Activated naive CD4-positive, alpha-beta T cell treated with anti-CD3 and anti-CD28 coated beads for 36 hours (primary cell): ENCODE measurements at regions of chr1 and their contacts with region 1.

Region 1: DNA sequence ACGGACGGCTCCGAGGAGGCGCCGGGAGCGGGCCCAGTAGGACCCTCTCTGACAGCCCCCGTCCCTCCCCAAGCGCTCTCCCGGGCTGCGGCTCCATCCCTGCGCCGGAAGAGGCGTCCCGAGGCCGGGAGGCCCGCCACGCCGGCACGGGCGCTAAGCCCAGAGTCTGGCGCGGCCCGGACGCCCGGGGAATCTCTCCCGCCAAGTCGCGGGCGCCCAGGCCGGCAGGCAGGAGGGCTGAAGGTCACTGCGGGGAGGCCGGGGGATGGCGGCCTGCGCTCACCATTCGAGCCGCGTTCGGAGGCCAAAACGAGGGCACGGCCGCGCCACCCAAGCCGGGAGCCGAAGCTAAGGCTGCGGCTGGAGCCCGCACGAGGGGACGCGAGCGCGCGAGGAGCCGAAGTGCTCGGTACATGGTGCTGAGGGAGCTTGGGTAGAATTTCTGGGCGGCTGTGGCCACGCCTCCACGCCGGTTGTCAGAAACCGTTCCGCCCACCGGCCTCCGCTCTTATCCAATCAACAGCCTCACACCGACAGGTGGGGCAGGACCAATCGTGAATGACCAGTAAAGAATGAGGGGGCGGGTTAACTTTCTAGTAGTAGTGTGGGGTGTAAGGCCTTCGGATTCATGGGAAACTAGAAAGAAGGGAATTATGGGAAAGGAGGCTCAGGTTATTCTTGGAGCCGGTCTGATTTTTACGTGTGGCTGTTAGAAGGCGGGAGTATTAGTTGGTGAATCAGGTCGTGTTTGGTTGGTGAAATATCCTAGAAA is at the start of gene FH:
- DNase-seq: peak; percentile 97
- H3K4me3 Mint-ChIP-seq: peak within 1 kb of the TSS; percentile 89
- H3K27ac Mint-ChIP-seq: peak within 1 kb of the TSS; percentile 77
- H3K4me1 Mint-ChIP-seq: peaks cover 11% of the 10 kb centered on the region
- H3K27me3 Mint-ChIP-seq: peaks cover 11% of the 10 kb centered on the region
- total RNA-seq, gene FH: 91.6 to 95.4 TPM

Region 2: GRCh38 chr1:241536969-241537368 is 17.5 kb after region 1 on chr1:
- CTCF ChIA-PET with region 1: no interaction called
- intact Hi-C with region 1: no loop called
- DNase-seq: no peak
- H3K4me3 Mint-ChIP-seq: no peak overlapping the region
- H3K27ac Mint-ChIP-seq: no peak overlapping the region
- H3K4me1 Mint-ChIP-seq: peaks cover 14% of the 10 kb centered on the region
- H3K27me3 Mint-ChIP-seq: peaks cover 2% of the 10 kb centered on the region

Region 3: GRCh38 chr1:241551759-241552638 is 32.5 kb after region 1 on chr1:
- CTCF ChIA-PET with region 1: no interaction called
- intact Hi-C with region 1: loop called (anchors 1 kb)
- DNase-seq: peak; percentile 75
- H3K4me3 Mint-ChIP-seq: peak overlapping the region; percentile 67
- H3K27ac Mint-ChIP-seq: peak overlapping the region; percentile 89
- H3K4me1 Mint-ChIP-seq: peaks cover 20% of the 10 kb centered on the region
- H3K27me3 Mint-ChIP-seq: peaks cover 2% of the 10 kb centered on the region